ENCODE measurements at regions of chr12 and their contacts with region 1.

Region 1: DNA sequence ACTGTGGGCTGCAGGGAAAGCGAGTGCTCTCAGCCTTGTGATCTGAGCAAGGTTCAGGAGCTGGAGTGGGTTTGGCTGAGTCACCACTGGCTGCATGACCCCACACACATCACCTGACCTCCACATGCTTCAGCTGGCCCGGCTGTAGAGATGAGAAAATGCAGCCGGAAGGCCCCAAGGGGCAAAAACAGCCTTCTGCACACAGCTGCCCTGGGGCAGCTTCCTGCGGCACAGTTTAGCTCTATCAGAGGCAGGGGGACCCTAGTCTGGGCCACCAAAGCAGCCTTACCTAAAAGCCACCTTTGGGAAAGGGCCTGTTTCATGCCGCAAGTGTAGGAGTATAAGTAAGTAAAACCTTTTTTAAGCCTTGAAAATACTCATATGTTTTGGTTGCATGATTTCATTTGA is 123.3 kb downstream of the SSPN start:
- DNase-seq: no peak
- H3K4me3 Mint-ChIP-seq: no peak overlapping the region
- H3K27ac Mint-ChIP-seq: no peak overlapping the region
- H3K4me1 Mint-ChIP-seq: peaks cover 7% of the 10 kb centered on the region
- H3K27me3 Mint-ChIP-seq: peaks cover 23% of the 10 kb centered on the region

Region 2: DNA sequence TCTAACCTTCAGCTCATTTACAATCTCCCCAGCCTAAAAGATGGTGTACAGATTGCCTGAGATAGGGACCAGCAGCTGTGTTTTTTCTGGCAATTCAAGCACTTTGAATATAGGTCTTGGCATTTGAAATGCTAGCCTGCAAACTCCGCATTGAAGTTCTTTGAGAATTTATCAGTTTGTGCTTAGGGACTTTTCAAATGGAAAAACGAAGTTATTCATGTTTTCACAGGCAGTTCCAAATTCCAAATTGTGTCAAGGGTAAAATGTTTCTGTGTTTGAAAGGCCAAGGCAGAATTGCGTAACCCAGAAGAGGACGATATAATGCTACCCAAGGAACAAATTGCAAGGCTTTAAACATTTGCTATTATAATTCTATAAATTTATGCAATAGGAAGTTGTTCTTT is 529.1 kb before region 1 on chr12:
- CTCF ChIA-PET with region 1: no interaction called
- intact Hi-C with region 1: no loop called
- DNase-seq: no peak
- H3K4me3 Mint-ChIP-seq: no peak overlapping the region
- H3K27ac Mint-ChIP-seq: no peak overlapping the region
- H3K4me1 Mint-ChIP-seq: no peaks in the 10 kb centered on the region
- H3K27me3 Mint-ChIP-seq: no peaks in the 10 kb centered on the region

Region 3: GRCh38 chr12:26274441-26275312 is 44.0 kb before region 1 on chr12:
- CTCF ChIA-PET with region 1: no interaction called
- intact Hi-C with region 1: loop called (anchors 1 kb)
- DNase-seq: peak; percentile 76
- H3K4me3 Mint-ChIP-seq: no peak overlapping the region
- H3K27ac Mint-ChIP-seq: no peak overlapping the region
- H3K4me1 Mint-ChIP-seq: peaks cover 8% of the 10 kb centered on the region
- H3K27me3 Mint-ChIP-seq: no peaks in the 10 kb centered on the region

Region 4: DNA sequence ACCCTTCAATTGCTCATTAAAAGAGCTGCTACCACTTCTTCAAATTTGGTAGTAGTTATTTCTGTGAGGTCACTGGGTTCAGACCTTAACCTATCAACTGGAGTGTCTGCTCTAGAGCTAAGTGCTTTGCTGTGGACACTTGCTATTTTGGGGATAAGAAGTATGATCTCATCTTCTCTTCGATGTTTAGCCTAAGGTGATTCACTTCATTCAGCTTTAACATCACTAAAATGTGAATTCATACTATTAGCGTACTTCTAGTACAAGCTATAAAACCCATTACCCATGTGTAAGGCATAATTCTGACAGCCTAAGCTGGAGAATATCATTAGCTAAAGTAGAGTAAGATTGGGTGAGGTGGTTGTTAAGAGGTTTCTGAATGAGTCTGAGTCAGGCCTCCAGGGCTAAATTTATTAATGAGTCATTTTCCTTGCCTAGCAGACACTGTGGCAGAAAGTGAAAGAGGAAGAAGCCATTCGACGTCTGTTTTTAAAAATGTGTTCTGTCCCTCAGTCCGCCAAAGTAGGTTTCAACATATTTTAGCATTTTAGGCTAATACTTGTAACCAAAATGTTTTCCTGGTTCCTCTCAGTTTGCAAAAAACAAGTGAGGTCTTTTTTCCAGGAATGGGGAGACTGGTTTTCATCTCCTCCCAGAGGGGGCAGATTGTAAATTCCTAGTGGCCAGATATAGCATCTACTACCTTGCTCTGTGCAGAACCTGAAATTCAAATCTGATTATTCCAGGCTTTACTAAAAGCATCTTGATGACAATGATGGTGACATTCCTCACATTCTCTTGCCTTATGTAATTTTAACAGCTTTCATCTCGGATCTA is 19.7 kb before region 1 on chr12:
- CTCF ChIA-PET with region 1: no interaction called
- intact Hi-C with region 1: loop called (anchors 1 kb)
- DNase-seq: no peak
- H3K4me3 Mint-ChIP-seq: no peak overlapping the region
- H3K27ac Mint-ChIP-seq: no peak overlapping the region
- H3K4me1 Mint-ChIP-seq: peaks cover 22% of the 10 kb centered on the region
- H3K27me3 Mint-ChIP-seq: peaks cover 10% of the 10 kb centered on the region

Region 5: DNA sequence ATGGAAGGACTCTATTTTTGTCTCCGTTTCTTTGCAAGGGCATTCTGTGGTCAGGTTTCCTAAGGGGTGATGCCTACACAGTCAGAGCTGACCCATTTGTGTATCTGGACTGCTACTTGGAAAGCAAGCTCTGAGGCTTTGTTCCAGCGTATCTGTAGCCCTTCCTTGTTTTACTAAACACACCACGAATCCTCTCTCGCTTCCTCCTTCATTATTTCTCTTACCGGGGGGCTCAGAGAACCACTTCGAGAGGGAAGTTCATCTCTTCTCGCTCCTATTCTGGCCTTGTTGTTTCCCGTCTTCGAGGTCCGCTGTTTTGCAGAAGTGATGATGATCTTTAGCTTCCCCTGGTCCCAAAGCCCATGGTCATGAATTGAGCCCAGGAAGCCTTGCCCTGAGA is 41.4 kb after region 1 on chr12:
- CTCF ChIA-PET with region 1: no interaction called
- intact Hi-C with region 1: no loop called
- DNase-seq: no peak
- H3K4me3 Mint-ChIP-seq: no peak overlapping the region
- H3K27ac Mint-ChIP-seq: no peak overlapping the region
- H3K4me1 Mint-ChIP-seq: no peaks in the 10 kb centered on the region
- H3K27me3 Mint-ChIP-seq: no peaks in the 10 kb centered on the region

Region 6: GRCh38 chr12:26378711-26379110 is 60.0 kb after region 1 on chr12:
- CTCF ChIA-PET with region 1: no interaction called
- intact Hi-C with region 1: no loop called
- DNase-seq: no peak
- H3K4me3 Mint-ChIP-seq: no peak overlapping the region
- H3K27ac Mint-ChIP-seq: no peak overlapping the region
- H3K4me1 Mint-ChIP-seq: no peaks in the 10 kb centered on the region
- H3K27me3 Mint-ChIP-seq: no peaks in the 10 kb centered on the region

Region 7: DNA sequence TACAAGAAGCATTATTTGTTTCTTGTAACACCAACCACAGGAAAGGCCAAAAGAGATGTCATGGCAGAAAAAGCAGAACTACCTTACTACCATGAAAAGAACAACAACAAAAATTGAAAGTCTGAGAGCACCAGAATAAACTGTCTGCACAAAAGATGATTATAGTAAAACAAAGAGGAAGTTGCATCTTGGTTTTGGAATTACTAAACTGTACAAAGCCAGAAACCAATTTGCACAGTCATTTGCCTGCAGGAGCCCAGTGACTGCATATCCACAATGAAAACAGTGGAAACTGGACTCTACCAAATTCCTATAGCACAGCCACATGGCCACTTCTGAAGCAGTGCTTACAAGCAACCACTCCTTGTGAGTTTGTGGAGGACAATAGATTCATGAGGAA is 152.9 kb after region 1 on chr12:
- CTCF ChIA-PET with region 1: no interaction called
- intact Hi-C with region 1: loop called (anchors 5 kb)
- DNase-seq: peak; percentile 39
- H3K4me3 Mint-ChIP-seq: no peak overlapping the region
- H3K27ac Mint-ChIP-seq: peak overlapping the region; percentile 33
- H3K4me1 Mint-ChIP-seq: peaks cover 12% of the 10 kb centered on the region
- H3K27me3 Mint-ChIP-seq: no peaks in the 10 kb centered on the region